WTC11 (cell line): ENCODE measurements at regions of chr7 and their contacts with region 1.

Region 1: GRCh38 chr7:20557116-20557515 is 58.4 kb upstream of the ABCB5 start:
- DNase-seq: no peak
- ATAC-seq: no peak
- H3K4me3 Mint-ChIP-seq: no peak overlapping the region
- H3K27ac Mint-ChIP-seq: no peak overlapping the region
- H3K4me1 Mint-ChIP-seq: peaks cover 9% of the 10 kb centered on the region
- H3K27me3 Mint-ChIP-seq: no peaks in the 10 kb centered on the region; the same call in 1 of the 2 replicates
- CTCF ChIP-seq: no peak

Region 2: GRCh38 chr7:20539201-20539600 is 17.9 kb before region 1 on chr7:
- CTCF ChIA-PET with region 1: interaction called, 11 read pairs
- POLR2A ChIA-PET with region 1: no interaction called
- DNase-seq: no peak
- ATAC-seq: peak; percentile 88
- H3K4me3 Mint-ChIP-seq: no peak overlapping the region
- H3K27ac Mint-ChIP-seq: no peak overlapping the region
- H3K4me1 Mint-ChIP-seq: peaks cover 12% of the 10 kb centered on the region
- H3K27me3 Mint-ChIP-seq: no peaks in the 10 kb centered on the region
- CTCF ChIP-seq: 0 out of 2 replicates have a peak, but pooled peaks have one; percentile 11